ENCODE measurements at regions of chr7 and their contacts with region 1.

Region 1: DNA sequence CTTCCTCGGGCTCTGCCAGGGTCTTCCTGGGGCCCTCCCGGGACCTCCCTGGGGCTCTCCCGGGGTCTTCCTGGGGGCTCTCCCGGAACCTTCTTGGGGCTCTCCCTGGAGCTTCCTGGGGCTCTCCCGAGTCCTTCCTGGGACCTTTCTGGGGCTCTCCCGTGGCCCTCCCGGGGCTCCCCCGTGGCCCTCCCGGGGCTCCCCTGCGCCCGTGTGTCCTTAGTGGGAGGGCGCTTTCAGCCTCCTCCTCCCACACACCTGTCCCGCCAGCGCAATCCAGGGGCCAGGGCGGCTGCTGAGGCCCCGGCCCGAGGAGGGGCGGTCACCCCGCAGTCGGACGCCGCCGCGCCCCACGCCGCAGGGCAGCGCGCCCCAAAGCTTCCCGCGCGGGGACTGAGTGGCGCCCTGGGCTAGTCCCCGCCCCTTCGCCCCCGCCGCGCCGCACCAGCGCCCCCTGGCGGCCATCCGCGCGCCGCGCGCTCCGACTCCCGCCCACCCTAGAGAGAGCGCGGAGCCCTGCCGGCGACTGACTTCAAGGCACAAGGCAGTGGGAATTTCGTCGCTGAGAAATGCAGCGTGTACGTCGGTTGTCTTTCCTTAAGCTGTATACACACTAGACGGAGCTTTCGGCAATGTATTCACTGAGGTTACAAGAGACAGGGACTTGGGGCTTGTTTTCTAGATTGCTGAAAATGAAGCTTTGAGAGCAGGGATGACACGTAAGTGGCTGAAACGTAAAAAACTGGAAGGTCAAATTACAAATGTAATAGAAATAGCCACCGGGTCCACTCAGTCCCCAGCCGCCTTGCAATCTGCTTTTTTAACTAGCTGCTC is 47.1 kb downstream of the INSIG1 start:
- DNase-seq: peak; percentile 79
- H3K4me3 ChIP-seq: peak overlapping the region; percentile 36
- H3K27ac ChIP-seq: no peak overlapping the region
- H3K4me1 ChIP-seq: no peaks in the 10 kb centered on the region
- H3K27me3 ChIP-seq: no peaks in the 10 kb centered on the region
- CTCF ChIP-seq: peak; percentile 74

Region 2: GRCh38 chr7:154927624-154928143 is 417.1 kb before region 1 on chr7:
- intact Hi-C with region 1: loop called (anchors 2 kb)
- DNase-seq: peak; percentile 87
- H3K4me3 ChIP-seq: peak overlapping the region; percentile 55
- H3K27ac ChIP-seq: peak overlapping the region; percentile 91
- H3K4me1 ChIP-seq: no peaks in the 10 kb centered on the region
- H3K27me3 ChIP-seq: no peaks in the 10 kb centered on the region
- CTCF ChIP-seq: peak; percentile 51

Region 3: GRCh38 chr7:155003376-155004214 is 341.2 kb before region 1 on chr7:
- intact Hi-C with region 1: loop called (anchors 10 kb)
- DNase-seq: peak; percentile 76
- H3K4me3 ChIP-seq: peak overlapping the region; percentile 66
- H3K27ac ChIP-seq: peak overlapping the region; percentile 69
- H3K4me1 ChIP-seq: no peaks in the 10 kb centered on the region
- H3K27me3 ChIP-seq: no peaks in the 10 kb centered on the region
- CTCF ChIP-seq: no peak

Region 4: GRCh38 chr7:155190688-155191087 is 154.1 kb before region 1 on chr7:
- intact Hi-C with region 1: loop called (anchors 5 kb)
- DNase-seq: peak; percentile 51
- H3K4me3 ChIP-seq: no peak overlapping the region
- H3K27ac ChIP-seq: no peak overlapping the region
- H3K4me1 ChIP-seq: no peaks in the 10 kb centered on the region
- H3K27me3 ChIP-seq: no peaks in the 10 kb centered on the region
- CTCF ChIP-seq: peak; percentile 70

Measured in colonic mucosa (tissue), 4 donors.